ENCODE measurements at regions of chr19 and their contacts with region 1.

Region 1: DNA sequence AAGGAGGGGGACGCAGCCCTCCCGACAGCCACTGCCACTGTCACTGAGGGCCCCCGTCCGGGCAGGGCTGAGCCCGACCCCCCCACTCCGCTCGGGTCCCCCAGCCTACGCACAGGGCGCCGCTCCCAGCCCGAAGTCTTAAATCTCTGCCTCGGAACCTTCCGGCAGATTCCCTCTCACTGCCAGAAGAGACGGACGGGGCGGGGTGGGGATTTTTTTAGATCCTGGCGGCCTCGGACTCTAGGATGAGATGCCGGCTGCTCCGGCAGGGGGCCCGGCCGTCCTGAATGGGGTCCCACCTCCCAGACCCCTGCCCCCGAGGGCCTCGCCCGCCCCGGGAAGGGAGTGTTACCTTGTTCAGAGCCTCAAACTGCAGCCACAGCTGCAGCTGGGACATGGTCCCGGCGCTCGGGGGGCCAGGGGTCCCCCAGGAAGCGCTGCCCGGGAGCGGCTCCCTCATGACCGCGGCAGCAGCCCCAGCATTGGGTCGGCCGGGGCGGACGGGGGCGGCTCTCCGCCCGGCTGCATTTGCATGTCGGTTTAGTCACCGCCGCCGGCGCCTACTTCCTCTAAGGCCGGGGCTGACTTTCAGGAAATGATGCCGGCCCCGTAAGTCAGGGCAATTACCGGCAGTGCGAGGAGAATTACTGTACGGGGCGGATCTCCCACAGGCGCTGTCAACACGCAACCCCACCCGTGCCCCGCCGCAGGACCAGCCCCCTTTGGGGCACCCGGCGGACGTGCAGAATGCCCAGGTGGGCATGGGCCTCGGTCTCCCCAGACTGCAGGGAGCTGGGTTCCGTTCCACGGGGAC is 28.2 kb downstream of the GPX4 start:
- DNase-seq: peak; percentile 91
- ATAC-seq: peak; percentile 73
- H3K4me3 ChIP-seq: peak overlapping the region; percentile 41 to 92 (median 78)
- H3K4me3 Mint-ChIP-seq: peak overlapping the region; percentile 90
- H3K27ac ChIP-seq: peak overlapping the region; percentile 78 to 89
- H3K27ac Mint-ChIP-seq: peak overlapping the region; percentile 93
- H3K4me1 ChIP-seq: peaks cover 42 to 58% of the 10 kb centered on the region in 2 donors
- H3K4me1 Mint-ChIP-seq: peaks cover 38% of the 10 kb centered on the region
- H3K27me3 ChIP-seq: no peaks in the 10 kb centered on the region
- H3K27me3 Mint-ChIP-seq: no peaks in the 10 kb centered on the region
- CTCF ChIP-seq: no peak

Region 2: GRCh38 chr19:1151917-1152617 is 20.1 kb after region 1 on chr19:
- CTCF ChIA-PET with region 1: no interaction called
- POLR2A ChIA-PET with region 1: no interaction called
- intact Hi-C with region 1: no loop called
- DNase-seq: no peak
- ATAC-seq: no peak
- H3K4me3 ChIP-seq: no peak overlapping the region
- H3K4me3 Mint-ChIP-seq: no peak overlapping the region
- H3K27ac ChIP-seq: no peak overlapping the region
- H3K27ac Mint-ChIP-seq: no peak overlapping the region
- H3K4me1 ChIP-seq: no peaks in the 10 kb centered on the region
- H3K4me1 Mint-ChIP-seq: no peaks in the 10 kb centered on the region
- H3K27me3 ChIP-seq: no peaks in the 10 kb centered on the region
- H3K27me3 Mint-ChIP-seq: no peaks in the 10 kb centered on the region
- CTCF ChIP-seq: no peak

Region 3: GRCh38 chr19:1173845-1174809 is 42.2 kb after region 1 on chr19 and contains the start of gene SBNO2:
- CTCF ChIA-PET with region 1: interaction called, 3 read pairs
- POLR2A ChIA-PET with region 1: interaction called, 6 read pairs
- intact Hi-C with region 1: loop called (anchors 1 kb)
- DNase-seq: peak; percentile 92
- ATAC-seq: peak; percentile 95
- H3K4me3 ChIP-seq: peak within 1 kb of the TSS; percentile 59 to 98 (median 81)
- H3K4me3 Mint-ChIP-seq: peak within 1 kb of the TSS; percentile 89
- H3K27ac ChIP-seq: peak within 1 kb of the TSS; percentile 51 to 85
- H3K27ac Mint-ChIP-seq: peak within 1 kb of the TSS; percentile 92
- H3K4me1 ChIP-seq: peaks cover 6 to 13% of the 10 kb centered on the region in 2 donors
- H3K4me1 Mint-ChIP-seq: peaks cover 28% of the 10 kb centered on the region
- H3K27me3 ChIP-seq: no peaks in the 10 kb centered on the region
- H3K27me3 Mint-ChIP-seq: no peaks in the 10 kb centered on the region
- CTCF ChIP-seq: no peak
- total RNA-seq, gene SBNO2: 83.3 and 85.9 TPM in 2 replicates

Region 4: DNA sequence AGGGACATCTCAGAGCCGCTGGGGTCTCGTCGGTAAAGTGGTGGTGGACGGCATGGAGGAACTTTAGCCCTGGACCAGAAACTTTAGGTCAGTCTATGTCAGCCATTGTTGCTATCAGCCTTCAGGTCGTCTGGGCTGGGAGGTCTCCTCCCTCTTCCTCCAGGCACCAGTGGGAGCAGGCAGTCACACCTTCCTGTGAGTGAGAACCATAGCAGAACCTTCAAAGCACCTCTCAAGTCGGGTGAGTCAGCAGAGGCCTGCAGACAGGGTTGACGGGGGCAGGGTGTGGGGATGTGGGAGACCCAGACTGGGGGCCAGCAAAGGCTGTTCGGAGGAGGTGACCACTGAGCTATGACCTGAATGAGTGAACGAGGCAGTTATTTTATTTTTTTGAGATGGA is 57.5 kb after region 1 on chr19:
- CTCF ChIA-PET with region 1: interaction called, 6 read pairs
- POLR2A ChIA-PET with region 1: no interaction called
- intact Hi-C with region 1: loop called (anchors 5 kb)
- DNase-seq: no peak
- ATAC-seq: no peak
- H3K4me3 ChIP-seq: no peak overlapping the region
- H3K4me3 Mint-ChIP-seq: no peak overlapping the region
- H3K27ac ChIP-seq: no peak overlapping the region
- H3K27ac Mint-ChIP-seq: no peak overlapping the region
- H3K4me1 ChIP-seq: no peaks in the 10 kb centered on the region
- H3K4me1 Mint-ChIP-seq: no peaks in the 10 kb centered on the region
- H3K27me3 ChIP-seq: no peaks in the 10 kb centered on the region
- H3K27me3 Mint-ChIP-seq: no peaks in the 10 kb centered on the region
- CTCF ChIP-seq: no peak

Measured in B cell (primary cell).